ENCODE measurements at regions of chr10 and their contacts with region 1.

Region 1: GRCh38 chr10:49407552-49408137 is 11.8 kb upstream of the DRGX start:
- DNase-seq: peak; percentile 66 to 84
- H3K4me3 ChIP-seq: no peak overlapping the region
- H3K27ac ChIP-seq: no peak overlapping the region
- H3K4me1 ChIP-seq: no peaks in the 10 kb centered on the region
- H3K27me3 ChIP-seq: peaks cover 10% of the 10 kb centered on the region
- CTCF ChIP-seq: peak; percentile 97

Region 2: DNA sequence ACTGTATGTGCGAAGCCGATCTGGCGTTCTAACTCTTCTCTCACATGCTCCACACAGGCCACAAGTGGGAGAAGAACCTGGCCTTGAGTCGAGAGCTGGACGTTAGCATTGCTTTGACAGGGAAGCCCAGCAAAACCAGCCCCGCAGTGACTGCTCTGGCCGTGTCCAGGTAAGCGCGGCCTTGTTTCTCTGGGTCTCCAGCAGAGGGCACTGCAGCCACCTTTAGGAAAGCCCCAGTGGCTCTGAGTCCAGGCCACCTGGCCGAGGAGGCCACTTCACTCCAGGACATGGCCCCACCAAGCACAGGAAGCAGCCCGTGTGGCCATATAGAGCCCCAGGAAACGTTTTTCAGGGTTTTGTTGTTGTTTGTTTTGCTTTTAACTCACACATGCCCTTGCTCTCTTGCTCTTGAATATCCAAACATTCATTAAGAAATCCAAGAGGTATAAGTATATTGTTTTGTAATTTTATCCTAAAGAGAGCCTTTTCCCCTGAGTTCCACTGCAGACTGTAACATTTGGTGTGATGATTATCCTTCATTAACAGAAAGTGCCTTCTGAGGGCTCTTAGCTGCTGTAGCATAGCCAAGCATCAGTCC is 426.2 kb before region 1 on chr10:
- CTCF ChIA-PET with region 1: no interaction called
- POLR2A ChIA-PET with region 1: no interaction called
- intact Hi-C with region 1: loop called (anchors 10 kb)
- DNase-seq: peak in 1 of 2 experiments; percentile 55
- H3K4me3 ChIP-seq: no peak overlapping the region
- H3K27ac ChIP-seq: no peak overlapping the region
- H3K4me1 ChIP-seq: no peaks in the 10 kb centered on the region
- H3K27me3 ChIP-seq: peaks cover 11% of the 10 kb centered on the region; the same call in 1 of the 2 replicates
- CTCF ChIP-seq: peak; percentile 81

Region 3: GRCh38 chr10:49123981-49124920 is 283.4 kb before region 1 on chr10:
- CTCF ChIA-PET with region 1: no interaction called
- POLR2A ChIA-PET with region 1: no interaction called
- intact Hi-C with region 1: no loop called
- DNase-seq: no peak
- H3K4me3 ChIP-seq: no peak overlapping the region
- H3K27ac ChIP-seq: no peak overlapping the region
- H3K4me1 ChIP-seq: no peaks in the 10 kb centered on the region
- H3K27me3 ChIP-seq: peaks cover 49% of the 10 kb centered on the region
- CTCF ChIP-seq: no peak

Region 4: GRCh38 chr10:49463605-49464004 is 56.0 kb after region 1 on chr10:
- CTCF ChIA-PET with region 1: interaction called, 3 read pairs
- POLR2A ChIA-PET with region 1: no interaction called
- intact Hi-C with region 1: loop called (anchors 5 kb)
- DNase-seq: no peak
- H3K4me3 ChIP-seq: no peak overlapping the region
- H3K27ac ChIP-seq: no peak overlapping the region
- H3K4me1 ChIP-seq: no peaks in the 10 kb centered on the region
- H3K27me3 ChIP-seq: no peaks in the 10 kb centered on the region
- CTCF ChIP-seq: no peak

Region 5: GRCh38 chr10:49512121-49512809 is 104.6 kb after region 1 on chr10:
- CTCF ChIA-PET with region 1: interaction called, 36 read pairs
- POLR2A ChIA-PET with region 1: no interaction called
- intact Hi-C with region 1: loop called (anchors 1 kb)
- DNase-seq: peak in 1 of 2 experiments; percentile 11
- H3K4me3 ChIP-seq: no peak overlapping the region
- H3K27ac ChIP-seq: no peak overlapping the region
- H3K4me1 ChIP-seq: no peaks in the 10 kb centered on the region
- H3K27me3 ChIP-seq: no peaks in the 10 kb centered on the region
- CTCF ChIP-seq: peak; percentile 85

Region 6: GRCh38 chr10:49518982-49519578 is 111.4 kb after region 1 on chr10:
- CTCF ChIA-PET with region 1: interaction called, 7 read pairs
- POLR2A ChIA-PET with region 1: no interaction called
- intact Hi-C with region 1: loop called (anchors 1 kb)
- DNase-seq: peak in 1 of 2 experiments; percentile 40
- H3K4me3 ChIP-seq: no peak overlapping the region
- H3K27ac ChIP-seq: no peak overlapping the region
- H3K4me1 ChIP-seq: no peaks in the 10 kb centered on the region
- H3K27me3 ChIP-seq: no peaks in the 10 kb centered on the region
- CTCF ChIP-seq: peak; percentile 94

Region 7: GRCh38 chr10:50360077-50360850 is 952.6 kb after region 1 on chr10:
- CTCF ChIA-PET with region 1: no interaction called
- POLR2A ChIA-PET with region 1: no interaction called
- intact Hi-C with region 1: no loop called
- DNase-seq: no peak
- H3K4me3 ChIP-seq: no peak overlapping the region
- H3K27ac ChIP-seq: no peak overlapping the region
- H3K4me1 ChIP-seq: peaks cover 39% of the 10 kb centered on the region
- H3K27me3 ChIP-seq: no peaks in the 10 kb centered on the region
- CTCF ChIP-seq: no peak